HepG2 (cell line): ENCODE measurements at regions of chr16 and their contacts with region 1.

Region 1: DNA sequence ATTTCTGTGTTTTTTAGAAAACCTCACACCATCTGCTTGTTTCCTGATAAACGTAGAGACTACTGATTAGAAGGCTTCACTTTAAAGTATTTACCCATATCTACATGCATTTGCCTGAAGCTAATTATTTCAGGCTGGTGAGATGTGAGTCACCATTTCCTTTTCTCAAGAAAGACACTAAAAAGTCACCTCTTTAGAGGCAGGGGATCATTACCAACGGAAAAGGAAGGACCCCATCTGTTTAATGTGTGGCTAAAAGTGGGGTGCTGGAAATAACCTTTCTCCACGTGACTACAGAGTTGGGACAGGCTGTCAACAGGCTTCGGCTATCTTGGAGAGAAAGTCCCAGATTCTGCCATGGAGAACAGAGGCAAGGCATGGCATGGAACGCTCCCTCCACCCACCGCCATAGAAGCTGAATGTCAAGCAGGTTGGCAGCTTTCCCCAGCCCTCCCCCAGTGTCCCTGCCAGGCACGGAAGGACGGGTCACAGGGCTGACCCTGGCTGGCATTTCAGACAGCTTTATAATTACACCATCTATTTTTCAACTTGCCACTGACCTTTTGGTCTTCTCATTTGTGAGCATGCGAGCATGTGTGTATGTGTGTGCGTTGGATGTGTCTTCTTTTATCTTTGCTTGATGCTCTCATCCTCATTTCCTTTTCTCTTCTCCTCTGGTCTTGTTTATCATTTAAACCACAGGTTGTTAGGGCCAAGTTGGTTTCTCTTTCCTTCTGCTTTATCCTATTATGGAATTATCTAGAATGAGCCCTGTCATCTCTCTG is 157.0 kb downstream of the CPPED1 start:
- DNase-seq: peak; percentile 47
- ATAC-seq: no peak
- H3K4me3 ChIP-seq: no peak overlapping the region
- H3K27ac ChIP-seq: no peak overlapping the region
- H3K4me1 ChIP-seq: peaks cover 48% of the 10 kb centered on the region
- H3K27me3 ChIP-seq: no peaks in the 10 kb centered on the region
- CTCF ChIP-seq: no peak
- EP300 ChIP-seq: no peak
- POLR2A ChIP-seq: no peak
- RAD21 ChIP-seq: no peak

Region 2: GRCh38 chr16:11546608-11547061 is 1100.0 kb before region 1 on chr16:
- CTCF ChIA-PET with region 1: no interaction called
- POLR2A ChIA-PET with region 1: no interaction called
- in situ Hi-C with region 1: no loop called
- intact Hi-C with region 1: no loop called
- DNase-seq: no peak
- ATAC-seq: no peak
- H3K4me3 ChIP-seq: no peak overlapping the region
- H3K27ac ChIP-seq: no peak overlapping the region
- H3K4me1 ChIP-seq: peaks cover under 1% of the 10 kb centered on the region; the same call in 1 of the 2 replicates
- H3K27me3 ChIP-seq: no peaks in the 10 kb centered on the region
- CTCF ChIP-seq: no peak
- EP300 ChIP-seq: no peak
- POLR2A ChIP-seq: no peak
- RAD21 ChIP-seq: no peak

Region 3: DNA sequence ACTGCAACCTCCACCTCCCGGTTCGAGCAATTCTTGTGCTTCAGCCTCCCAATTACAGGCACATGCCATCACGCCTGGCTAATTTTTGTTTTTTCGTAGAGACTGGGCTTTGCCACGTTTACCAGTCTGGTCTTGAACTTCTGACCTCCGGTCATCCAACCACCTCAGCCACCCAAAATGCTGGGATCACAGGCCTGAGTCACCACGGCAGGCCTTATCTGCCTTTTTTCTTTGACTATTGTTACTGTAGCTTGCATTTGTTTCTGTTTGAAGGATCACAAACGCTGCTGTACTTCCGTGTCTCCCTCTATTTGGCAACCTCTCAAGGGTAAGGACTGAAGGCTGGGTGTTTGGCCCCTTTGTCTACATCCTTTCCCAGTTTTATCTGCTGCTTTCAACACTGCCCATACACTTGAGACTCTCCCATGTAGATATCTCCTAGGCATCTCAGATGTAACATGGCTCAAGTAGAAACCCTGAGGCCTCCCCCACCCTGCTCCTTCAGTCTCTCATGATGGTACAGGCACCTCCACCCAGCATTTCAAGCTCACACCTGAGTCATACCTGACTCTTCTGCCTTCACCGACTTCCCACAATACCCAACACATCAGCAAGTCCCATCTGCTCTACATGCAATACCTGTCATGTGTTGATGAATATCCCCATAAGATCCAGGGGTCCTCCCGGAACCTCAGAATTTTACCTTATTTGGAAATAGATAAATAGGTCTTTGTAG is 62.0 kb before region 1 on chr16:
- CTCF ChIA-PET with region 1: no interaction called
- POLR2A ChIA-PET with region 1: interaction called, 11 read pairs
- in situ Hi-C with region 1: no loop called
- intact Hi-C with region 1: loop called (anchors 1 kb)
- DNase-seq: peak; percentile 91
- ATAC-seq: peak; percentile 52
- H3K4me3 ChIP-seq: no peak overlapping the region
- H3K27ac ChIP-seq: peak overlapping the region; percentile 27
- H3K4me1 ChIP-seq: peaks cover 48% of the 10 kb centered on the region
- H3K27me3 ChIP-seq: no peaks in the 10 kb centered on the region
- CTCF ChIP-seq: no peak
- EP300 ChIP-seq: peak; percentile 19 to 64; a peak in 2 of 4 replicates
- POLR2A ChIP-seq: no peak
- RAD21 ChIP-seq: no peak

Region 4: GRCh38 chr16:12758031-12758701 is 111.5 kb after region 1 on chr16:
- CTCF ChIA-PET with region 1: no interaction called
- POLR2A ChIA-PET with region 1: interaction called, 16 read pairs
- in situ Hi-C with region 1: no loop called
- intact Hi-C with region 1: no loop called
- DNase-seq: no peak
- ATAC-seq: no peak
- H3K4me3 ChIP-seq: no peak overlapping the region
- H3K27ac ChIP-seq: no peak overlapping the region
- H3K4me1 ChIP-seq: peaks cover 58% of the 10 kb centered on the region
- H3K27me3 ChIP-seq: no peaks in the 10 kb centered on the region
- CTCF ChIP-seq: no peak
- EP300 ChIP-seq: no peak
- POLR2A ChIP-seq: no peak
- RAD21 ChIP-seq: no peak

Region 5: DNA sequence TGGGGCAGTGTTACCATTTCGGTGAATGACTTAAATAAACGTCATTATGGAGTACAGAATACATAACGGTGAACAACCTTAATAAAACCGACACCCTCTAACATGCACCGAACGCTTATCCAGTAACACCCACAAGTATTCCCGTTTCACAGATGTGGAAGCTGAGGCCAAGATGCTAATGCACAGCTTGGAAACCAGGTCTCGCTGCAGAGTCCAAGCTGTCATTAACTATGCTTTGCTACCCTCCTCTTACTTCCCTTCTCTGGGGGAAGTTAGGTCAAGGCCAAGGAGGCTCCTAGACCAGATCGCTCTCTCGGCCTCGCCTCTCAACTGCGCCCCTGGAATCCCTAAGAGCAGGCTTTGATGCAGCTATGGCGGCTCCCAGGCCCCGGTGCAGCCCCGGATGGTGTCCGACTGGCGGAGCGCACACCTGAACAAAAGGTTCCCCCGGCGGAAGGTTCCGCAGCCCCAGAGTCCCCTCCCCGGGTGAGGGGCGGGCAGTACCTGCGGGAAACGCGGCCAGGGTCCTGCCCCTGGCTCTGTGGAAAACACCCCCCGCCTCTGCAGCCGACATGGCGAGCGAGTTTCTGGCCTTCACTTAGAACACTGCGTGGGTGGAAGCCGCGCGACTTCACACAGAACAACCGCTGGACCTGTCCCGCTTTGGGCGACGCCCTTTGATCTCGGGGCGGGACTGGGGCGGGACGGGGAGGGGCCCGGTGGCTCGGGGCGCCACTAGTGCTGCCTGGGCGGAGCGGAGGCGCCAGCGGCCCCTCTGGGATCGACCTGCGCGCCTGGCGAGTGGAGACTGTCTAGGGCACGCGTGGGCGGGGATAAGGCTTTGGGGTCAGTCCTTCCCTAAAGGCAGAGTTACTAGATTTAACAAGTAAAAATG is 156.8 kb after region 1 on chr16 and contains the start of gene CPPED1:
- CTCF ChIA-PET with region 1: no interaction called
- POLR2A ChIA-PET with region 1: interaction called, 11 read pairs
- in situ Hi-C with region 1: no loop called
- intact Hi-C with region 1: no loop called
- DNase-seq: peak; percentile 93
- ATAC-seq: peak; percentile 92
- H3K4me3 ChIP-seq: peak within 1 kb of the TSS; percentile 86 to 97 (median 87)
- H3K27ac ChIP-seq: peak within 1 kb of the TSS; percentile 97
- H3K4me1 ChIP-seq: peaks cover 58% of the 10 kb centered on the region
- H3K27me3 ChIP-seq: peaks cover 0 to 7% of the 10 kb centered on the region in 2 experiments; a peak in 1 of 5 replicates
- CTCF ChIP-seq: peak; percentile 45
- EP300 ChIP-seq: peak in 1 of 2 experiments; percentile 89
- POLR2A ChIP-seq: peak; percentile 94 to 97
- RAD21 ChIP-seq: peak; percentile 78
- total RNA-seq, gene CPPED1: 66.6 and 118 TPM in 2 replicates

Region 6: GRCh38 chr16:14310519-14310991 is 1663.9 kb after region 1 on chr16:
- CTCF ChIA-PET with region 1: no interaction called
- POLR2A ChIA-PET with region 1: no interaction called
- in situ Hi-C with region 1: no loop called
- intact Hi-C with region 1: loop called (anchors 5 kb)
- DNase-seq: peak; percentile 51
- ATAC-seq: peak; percentile 75
- H3K4me3 ChIP-seq: no peak overlapping the region; a peak in 1 of 6 replicates
- H3K27ac ChIP-seq: peak overlapping the region; percentile 54
- H3K4me1 ChIP-seq: peaks cover 69% of the 10 kb centered on the region
- H3K27me3 ChIP-seq: no peaks in the 10 kb centered on the region
- CTCF ChIP-seq: peak; percentile 48
- EP300 ChIP-seq: no peak; a peak in 1 of 4 replicates
- POLR2A ChIP-seq: no peak
- RAD21 ChIP-seq: peak; percentile 75